Activated CD4-positive, alpha-beta T cell treated with anti-CD3 and anti-CD28 coated beads for 36 hours (primary cell): ENCODE measurements at regions of chr1 and their contacts with region 1.

Region 1: GRCh38 chr1:23496490-23497181 is 12.7 kb upstream of the ASAP3 start:
- DNase-seq: no peak
- ATAC-seq: peak; percentile 12
- H3K4me3 Mint-ChIP-seq: no peak overlapping the region
- H3K27ac Mint-ChIP-seq: no peak overlapping the region
- H3K4me1 Mint-ChIP-seq: no peaks in the 10 kb centered on the region
- H3K27me3 Mint-ChIP-seq: no peaks in the 10 kb centered on the region

Region 2: DNA sequence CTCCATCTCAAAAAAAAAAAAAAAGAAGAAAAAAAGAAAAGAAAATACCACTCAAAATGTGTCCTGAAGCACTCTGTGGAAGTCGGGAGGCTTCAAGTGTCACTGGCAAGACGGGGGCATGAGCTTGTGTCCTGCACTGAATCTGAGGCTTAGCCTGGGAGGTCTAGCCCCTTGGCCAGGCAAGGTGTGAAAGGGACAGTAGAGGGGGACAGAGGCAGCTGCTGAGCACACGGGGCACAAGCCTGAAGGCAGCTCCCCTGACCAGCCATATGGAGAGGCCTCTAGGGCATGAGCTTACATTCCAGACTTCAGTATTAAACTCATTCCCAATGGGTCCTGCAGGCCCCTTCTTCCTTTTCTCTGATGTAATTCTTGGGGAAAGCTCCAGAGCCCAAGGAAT is 10.9 kb after region 1 on chr1:
- CTCF ChIA-PET with region 1: interaction called, 32 read pairs
- POLR2A ChIA-PET with region 1: interaction called, 6 read pairs
- intact Hi-C with region 1: no loop called
- DNase-seq: no peak
- ATAC-seq: no peak
- H3K4me3 Mint-ChIP-seq: no peak overlapping the region
- H3K27ac Mint-ChIP-seq: no peak overlapping the region
- H3K4me1 Mint-ChIP-seq: no peaks in the 10 kb centered on the region
- H3K27me3 Mint-ChIP-seq: no peaks in the 10 kb centered on the region

Region 3: DNA sequence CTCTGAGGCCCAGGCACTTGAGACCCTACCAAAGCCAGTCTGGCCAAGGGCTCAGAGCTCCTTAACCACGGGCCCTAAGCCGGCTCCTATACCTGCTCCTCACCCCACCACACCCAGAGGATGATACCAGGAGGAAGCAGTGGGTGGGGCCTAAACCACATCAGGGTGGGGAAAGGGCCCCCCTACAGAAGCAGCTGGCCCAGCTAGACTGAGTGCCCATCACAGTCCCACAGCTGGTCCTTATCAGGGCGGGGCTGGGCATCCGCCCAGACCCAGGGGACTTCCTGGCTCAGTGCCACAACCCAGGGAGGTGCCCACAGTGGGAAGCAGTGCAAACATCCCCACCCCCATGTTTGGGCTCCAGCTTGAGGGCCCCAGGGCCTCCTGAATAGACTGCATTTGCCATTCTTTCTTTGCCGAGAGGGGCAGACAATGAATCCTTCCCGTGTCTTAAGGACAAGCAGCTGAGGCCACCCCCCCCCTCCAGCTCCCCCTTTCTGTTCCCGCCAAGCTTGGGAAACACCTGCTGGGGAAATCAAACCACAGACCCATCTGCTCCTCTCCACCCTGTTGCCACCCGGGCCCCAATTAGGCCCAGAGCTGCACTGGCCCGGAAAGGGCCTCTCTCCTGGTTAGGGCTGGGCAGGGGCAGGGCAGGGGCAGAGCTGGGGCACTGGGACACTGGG is 28.2 kb after region 1 on chr1:
- CTCF ChIA-PET with region 1: interaction called, 67 read pairs
- POLR2A ChIA-PET with region 1: interaction called, 4 read pairs
- intact Hi-C with region 1: no loop called
- DNase-seq: peak; percentile 39
- ATAC-seq: no peak
- H3K4me3 Mint-ChIP-seq: peak overlapping the region; percentile 28
- H3K27ac Mint-ChIP-seq: peak overlapping the region; percentile 25
- H3K4me1 Mint-ChIP-seq: peaks cover 63% of the 10 kb centered on the region
- H3K27me3 Mint-ChIP-seq: no peaks in the 10 kb centered on the region

Region 4: DNA sequence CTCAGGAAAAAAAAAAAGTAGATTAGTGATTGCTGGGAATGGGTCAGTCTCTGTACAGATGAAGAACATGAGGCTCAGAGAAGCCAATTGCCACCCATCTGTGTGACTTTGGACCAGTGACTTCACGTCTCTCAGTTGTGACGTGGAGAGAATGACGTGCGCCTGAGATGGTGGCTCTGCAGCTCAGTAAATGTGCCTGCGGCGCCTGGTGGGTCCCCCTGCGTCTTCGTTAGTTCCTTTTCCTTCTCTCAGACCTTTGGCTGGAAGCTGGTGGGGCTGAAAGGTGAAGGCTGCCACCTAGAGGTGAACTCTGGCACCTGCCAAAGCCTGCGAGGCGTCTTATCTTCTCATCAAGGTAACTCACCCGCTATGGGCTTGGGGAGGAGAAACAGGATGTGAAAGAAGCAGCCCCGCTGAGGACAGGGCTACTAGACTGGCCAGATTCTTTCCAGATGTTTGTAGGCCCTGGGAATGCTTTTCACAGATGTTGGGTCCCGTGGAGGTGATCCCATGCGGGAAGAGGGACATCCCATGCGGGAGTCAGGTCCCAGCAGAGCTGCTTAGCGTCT is 43.1 kb after region 1 on chr1:
- CTCF ChIA-PET with region 1: interaction called, 197 read pairs
- POLR2A ChIA-PET with region 1: interaction called, 9 read pairs
- intact Hi-C with region 1: loop called (anchors 1 kb)
- DNase-seq: peak; percentile 95
- ATAC-seq: peak; percentile 95
- H3K4me3 Mint-ChIP-seq: peak overlapping the region; percentile 18
- H3K27ac Mint-ChIP-seq: peak overlapping the region; percentile 61
- H3K4me1 Mint-ChIP-seq: peaks cover 13% of the 10 kb centered on the region
- H3K27me3 Mint-ChIP-seq: no peaks in the 10 kb centered on the region

Region 5: GRCh38 chr1:23657659-23658275 is 161.1 kb after region 1 on chr1:
- CTCF ChIA-PET with region 1: interaction called, 18 read pairs
- POLR2A ChIA-PET with region 1: no interaction called
- intact Hi-C with region 1: no loop called
- DNase-seq: peak; percentile 72
- ATAC-seq: peak; percentile 91
- H3K4me3 Mint-ChIP-seq: no peak overlapping the region
- H3K27ac Mint-ChIP-seq: no peak overlapping the region
- H3K4me1 Mint-ChIP-seq: no peaks in the 10 kb centered on the region
- H3K27me3 Mint-ChIP-seq: no peaks in the 10 kb centered on the region

Region 6: GRCh38 chr1:24567792-24568388 is 1071.3 kb after region 1 on chr1:
- CTCF ChIA-PET with region 1: no interaction called
- POLR2A ChIA-PET with region 1: no interaction called
- intact Hi-C with region 1: no loop called
- DNase-seq: peak; percentile 23
- ATAC-seq: no peak
- H3K4me3 Mint-ChIP-seq: no peak overlapping the region
- H3K27ac Mint-ChIP-seq: no peak overlapping the region
- H3K4me1 Mint-ChIP-seq: peaks cover 15% of the 10 kb centered on the region
- H3K27me3 Mint-ChIP-seq: no peaks in the 10 kb centered on the region